ENCODE measurements at regions of chr6 and their contacts with region 1.

Region 1: DNA sequence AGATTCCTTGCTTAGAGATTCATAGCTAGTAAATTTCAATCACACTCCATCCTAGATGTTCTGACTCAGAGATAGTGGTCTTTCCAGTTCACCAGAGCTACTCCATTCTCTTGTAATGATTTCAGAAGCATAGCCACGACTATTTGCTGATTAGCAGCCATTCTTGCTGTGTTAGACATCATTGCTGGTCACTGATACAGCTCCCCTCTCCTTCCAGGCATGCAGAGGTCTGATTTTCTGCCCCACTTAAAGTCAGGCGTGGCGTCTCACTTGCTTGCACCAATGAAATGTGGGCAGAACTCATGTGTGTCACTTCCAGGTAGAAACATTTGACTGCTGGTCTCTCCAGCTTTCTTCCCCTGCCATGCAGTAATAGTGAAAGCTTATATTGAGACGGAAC is 168.9 kb upstream of the JARID2 start:
- DNase-seq: no peak
- H3K4me3 ChIP-seq: no peak overlapping the region
- H3K27ac ChIP-seq: no peak overlapping the region
- H3K4me1 ChIP-seq: peaks cover 5% of the 10 kb centered on the region
- H3K27me3 ChIP-seq: no peaks in the 10 kb centered on the region
- CTCF ChIP-seq: no peak

Region 2: GRCh38 chr6:15158821-15159619 is 82.0 kb after region 1 on chr6:
- CTCF ChIA-PET with region 1: interaction called, 16 read pairs
- POLR2A ChIA-PET with region 1: no interaction called
- intact Hi-C with region 1: no loop called
- DNase-seq: no peak
- H3K4me3 ChIP-seq: no peak overlapping the region
- H3K27ac ChIP-seq: no peak overlapping the region
- H3K4me1 ChIP-seq: no peaks in the 10 kb centered on the region
- H3K27me3 ChIP-seq: no peaks in the 10 kb centered on the region
- CTCF ChIP-seq: no peak

Measured in PC-9 (cell line).